Activated T-helper 1 cell treated with anti-CD3 and anti-CD28 coated beads, Interleukin-12 subunit alpha, Interleukin-12 subunit beta, Interleukin-2, Interleukin-4 antibody, amounts not matched to agents 30 ng/mL and 10 ng/mL and 1 ng/mL, durations not matched to agents 14 hours and 24 hours and 36 hours (primary cell): ENCODE measurements at regions of chr4 and their contacts with region 1.

Region 1: GRCh38 chr4:150033901-150034300 is 44.3 kb upstream of the DCLK2 start:
- DNase-seq: no peak
- H3K4me3 Mint-ChIP-seq: no peak overlapping the region
- H3K27ac Mint-ChIP-seq: no peak overlapping the region
- H3K4me1 Mint-ChIP-seq: no peaks in the 10 kb centered on the region
- H3K27me3 Mint-ChIP-seq: no peaks in the 10 kb centered on the region

Region 2: GRCh38 chr4:149987330-149988086 is 46.4 kb before region 1 on chr4:
- intact Hi-C with region 1: loop called (anchors 2 kb)
- DNase-seq: no peak
- H3K4me3 Mint-ChIP-seq: no peak overlapping the region
- H3K27ac Mint-ChIP-seq: no peak overlapping the region
- H3K4me1 Mint-ChIP-seq: peaks cover 31% of the 10 kb centered on the region
- H3K27me3 Mint-ChIP-seq: peaks cover 3% of the 10 kb centered on the region